Activated T-helper 2 cell treated with anti-CD3 and anti-CD28 coated beads, Interferon-gamma antibody, Interleukin-2, Interleukin-4, amounts not matched to agents 10 μg/mL and 5 μg/mL and 100 μg/mL, durations not matched to agents 14 hours and 24 hours and 36 hours (primary cell): ENCODE measurements at regions of chr12 and their contacts with region 1.

Region 1: GRCh38 chr12:32062881-32063280 is 43.8 kb upstream of the BICD1 start:
- DNase-seq: no peak
- H3K4me3 Mint-ChIP-seq: no peak overlapping the region
- H3K27ac Mint-ChIP-seq: no peak overlapping the region
- H3K4me1 Mint-ChIP-seq: peaks cover 16% of the 10 kb centered on the region
- H3K27me3 Mint-ChIP-seq: peaks cover 3% of the 10 kb centered on the region

Region 2: GRCh38 chr12:31659087-31659933 is 403.6 kb before region 1 on chr12 and contains the start of gene ETFBKMT:
- intact Hi-C with region 1: loop called (anchors 1 kb)
- DNase-seq: peak; percentile 95
- H3K4me3 Mint-ChIP-seq: peak within 1 kb of the TSS; percentile 95
- H3K27ac Mint-ChIP-seq: peak within 1 kb of the TSS; percentile 97
- H3K4me1 Mint-ChIP-seq: peaks cover 5% of the 10 kb centered on the region
- H3K27me3 Mint-ChIP-seq: no peaks in the 10 kb centered on the region
- total RNA-seq, gene ETFBKMT: 0.37 and 0.39 TPM in 2 replicates

Region 3: GRCh38 chr12:31682136-31682962 is 380.5 kb before region 1 on chr12:
- intact Hi-C with region 1: loop called (anchors 5 kb)
- DNase-seq: peak; percentile 46
- H3K4me3 Mint-ChIP-seq: no peak overlapping the region
- H3K27ac Mint-ChIP-seq: no peak overlapping the region
- H3K4me1 Mint-ChIP-seq: peaks cover 5% of the 10 kb centered on the region
- H3K27me3 Mint-ChIP-seq: no peaks in the 10 kb centered on the region

Region 4: DNA sequence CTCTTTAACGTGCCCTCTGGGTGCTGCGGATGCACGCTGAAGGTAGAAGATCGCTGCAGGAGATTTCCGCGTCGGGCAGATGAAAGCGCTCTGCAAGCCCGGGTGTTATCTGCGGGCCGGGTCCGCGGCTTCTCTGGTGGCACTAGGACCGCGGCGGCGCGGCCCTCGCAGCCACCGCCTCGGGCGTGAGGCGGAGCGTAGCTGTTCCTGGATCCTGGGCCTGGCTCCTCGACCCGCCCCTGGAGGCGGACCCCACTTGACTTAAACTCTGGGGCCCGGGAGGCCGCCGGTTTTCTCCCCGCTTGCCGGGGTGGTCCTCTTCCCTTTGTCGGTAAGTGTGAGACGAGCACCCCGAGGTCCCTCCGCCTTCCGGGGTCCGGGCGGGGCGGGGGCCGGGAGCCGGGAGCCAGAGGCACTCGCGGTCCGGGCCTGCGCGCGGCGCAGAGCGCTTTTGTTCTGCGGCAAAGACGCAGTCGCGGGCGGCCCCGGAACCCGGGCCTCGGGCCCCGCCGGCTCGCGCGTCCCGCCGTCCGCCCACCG is 103.7 kb before region 1 on chr12 and contains the start of gene RESF1:
- intact Hi-C with region 1: no loop called
- DNase-seq: peak; percentile 88
- H3K4me3 Mint-ChIP-seq: peak within 1 kb of the TSS; percentile 93
- H3K27ac Mint-ChIP-seq: peak within 1 kb of the TSS; percentile 98
- H3K4me1 Mint-ChIP-seq: peaks cover 63% of the 10 kb centered on the region
- H3K27me3 Mint-ChIP-seq: no peaks in the 10 kb centered on the region
- total RNA-seq, gene RESF1: 41.9 and 43.2 TPM in 2 replicates

Region 5: DNA sequence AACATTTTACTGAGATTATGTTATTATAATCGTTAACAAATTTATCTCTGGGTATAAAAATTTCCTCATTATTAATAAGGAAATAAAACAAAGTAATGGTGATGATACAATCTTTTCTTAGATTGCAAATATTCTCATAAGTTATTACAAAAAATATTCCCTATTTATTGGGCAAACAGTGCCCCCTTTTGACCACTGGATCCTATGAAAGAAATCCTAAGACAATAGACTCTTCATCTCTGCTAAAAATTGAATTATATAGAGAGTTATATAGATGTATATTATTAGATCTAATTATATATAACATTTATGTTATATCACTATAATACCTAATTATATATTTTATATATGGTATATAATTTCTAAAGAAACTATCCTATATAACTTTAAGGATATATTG is 242.3 kb after region 1 on chr12:
- intact Hi-C with region 1: loop called (anchors 2 kb)
- DNase-seq: no peak
- H3K4me3 Mint-ChIP-seq: no peak overlapping the region
- H3K27ac Mint-ChIP-seq: no peak overlapping the region
- H3K4me1 Mint-ChIP-seq: no peaks in the 10 kb centered on the region
- H3K27me3 Mint-ChIP-seq: no peaks in the 10 kb centered on the region

Region 6: GRCh38 chr12:32312049-32312670 is 249.3 kb after region 1 on chr12:
- intact Hi-C with region 1: loop called (anchors 1 kb)
- DNase-seq: no peak
- H3K4me3 Mint-ChIP-seq: no peak overlapping the region
- H3K27ac Mint-ChIP-seq: no peak overlapping the region
- H3K4me1 Mint-ChIP-seq: peaks cover 2% of the 10 kb centered on the region
- H3K27me3 Mint-ChIP-seq: peaks cover 5% of the 10 kb centered on the region